ENCODE measurements at regions of chr11 and their contacts with region 1.

Region 1: GRCh38 chr11:77047007-77047927 is 13.1 kb downstream of the B3GNT6 start:
- DNase-seq: peak; percentile 88
- ATAC-seq: peak; percentile 91
- H3K4me3 Mint-ChIP-seq: peak overlapping the region; percentile 64
- H3K27ac Mint-ChIP-seq: peak overlapping the region; percentile 3
- H3K4me1 Mint-ChIP-seq: peaks cover 10% of the 10 kb centered on the region
- H3K27me3 Mint-ChIP-seq: peaks cover 27% of the 10 kb centered on the region

Region 2: DNA sequence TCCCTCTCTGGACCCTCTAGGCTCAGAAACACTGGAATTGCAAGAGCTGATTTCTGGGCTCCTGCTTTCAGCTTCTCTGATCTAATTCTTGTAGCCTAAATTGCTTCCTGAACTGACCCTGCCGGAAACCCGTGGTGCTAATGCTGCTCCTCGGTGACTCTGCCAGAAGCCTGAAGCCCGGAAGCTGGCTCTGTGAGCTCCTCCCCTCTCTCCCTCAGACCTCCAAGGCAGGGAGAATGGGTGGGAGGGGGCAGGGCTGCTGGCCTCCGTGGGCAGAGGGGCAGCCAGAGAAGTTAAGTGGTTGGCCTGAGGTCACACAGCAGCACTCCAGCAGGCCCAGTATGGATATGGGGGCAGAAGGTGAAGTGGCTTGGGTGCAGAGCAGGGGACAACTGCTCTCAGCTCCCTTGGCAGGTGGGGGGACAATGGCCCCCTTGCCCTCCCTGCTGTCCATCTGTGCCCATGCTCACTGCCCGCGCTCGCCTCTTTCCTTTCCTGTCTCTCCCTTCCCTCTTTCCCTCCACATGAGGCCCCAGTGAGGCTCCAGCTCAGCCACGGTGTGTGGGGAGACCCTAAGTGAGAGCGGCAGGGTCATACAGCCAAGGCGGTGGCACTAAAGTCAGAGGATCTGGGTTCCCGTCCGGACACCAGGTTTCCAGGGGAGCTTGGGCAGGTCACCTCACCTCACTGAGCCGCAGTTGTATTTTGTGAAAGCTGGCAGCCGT is 35.7 kb after region 1 on chr11:
- CTCF ChIA-PET with region 1: interaction called, 30 read pairs
- DNase-seq: peak; percentile 83
- ATAC-seq: peak; percentile 95
- H3K4me3 Mint-ChIP-seq: peak overlapping the region; percentile 65
- H3K27ac Mint-ChIP-seq: peak overlapping the region; percentile 96
- H3K4me1 Mint-ChIP-seq: peaks cover 19% of the 10 kb centered on the region
- H3K27me3 Mint-ChIP-seq: peaks cover 5% of the 10 kb centered on the region

Region 3: GRCh38 chr11:77113382-77114088 is 66.3 kb after region 1 on chr11:
- CTCF ChIA-PET with region 1: interaction called, 12 read pairs
- DNase-seq: no peak
- ATAC-seq: no peak
- H3K4me3 Mint-ChIP-seq: no peak overlapping the region
- H3K27ac Mint-ChIP-seq: no peak overlapping the region
- H3K4me1 Mint-ChIP-seq: peaks cover 2% of the 10 kb centered on the region
- H3K27me3 Mint-ChIP-seq: no peaks in the 10 kb centered on the region

Region 4: GRCh38 chr11:77151804-77152509 is 104.7 kb after region 1 on chr11:
- CTCF ChIA-PET with region 1: no interaction called
- DNase-seq: peak; percentile 90
- ATAC-seq: peak; percentile 66
- H3K4me3 Mint-ChIP-seq: no peak overlapping the region
- H3K27ac Mint-ChIP-seq: peak overlapping the region; percentile 76
- H3K4me1 Mint-ChIP-seq: peaks cover 64% of the 10 kb centered on the region
- H3K27me3 Mint-ChIP-seq: peaks cover 35% of the 10 kb centered on the region

Region 5: DNA sequence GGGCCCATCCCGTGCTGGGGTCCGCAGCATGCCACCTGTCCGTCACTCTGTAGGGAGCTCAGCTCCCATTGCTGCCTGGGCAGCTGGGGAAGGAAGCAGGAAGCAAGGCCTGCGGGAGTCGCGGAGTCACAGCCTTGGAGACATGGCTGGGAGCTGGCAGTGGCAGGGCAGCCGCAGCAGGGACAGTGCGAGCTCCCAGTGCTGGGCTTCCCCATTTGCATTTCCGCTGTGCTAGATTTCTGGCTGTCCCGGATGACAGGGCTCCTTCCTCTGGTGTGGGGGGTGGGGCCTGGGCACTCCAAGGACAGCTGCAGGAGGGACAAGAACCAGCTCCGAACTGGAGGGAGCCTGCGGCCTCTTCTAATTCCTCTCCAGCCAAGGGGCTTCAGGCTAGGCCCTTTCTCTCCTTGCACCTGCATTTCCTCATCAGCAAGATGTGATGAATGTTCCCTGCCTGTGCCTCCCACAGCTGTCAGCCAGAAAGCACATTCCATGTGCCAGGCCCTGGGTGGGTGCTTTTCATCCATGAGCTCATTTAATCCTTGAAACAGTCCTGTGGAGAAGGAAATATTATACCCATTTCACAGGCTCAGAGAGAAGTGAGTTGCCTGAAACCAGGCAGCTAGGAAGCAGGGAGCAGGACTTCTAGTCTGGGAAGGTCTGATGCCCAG is 128.7 kb after region 1 on chr11:
- CTCF ChIA-PET with region 1: no interaction called
- DNase-seq: no peak
- ATAC-seq: no peak
- H3K4me3 Mint-ChIP-seq: no peak overlapping the region
- H3K27ac Mint-ChIP-seq: no peak overlapping the region
- H3K4me1 Mint-ChIP-seq: no peaks in the 10 kb centered on the region
- H3K27me3 Mint-ChIP-seq: no peaks in the 10 kb centered on the region

Measured in activated CD8-positive, alpha-beta memory T cell treated with anti-CD3 and anti-CD28 coated beads, Interleukin-2, amount 10 ng/mL, durations not matched to agents 7 days and 5 days (primary cell).